ENCODE measurements at regions of chr1 and their contacts with region 1.

Region 1: GRCh38 chr1:182601416-182601786 is 2.8 kb downstream of the RGS16 start:
- DNase-seq: peak; percentile 76 to 93
- H3K4me3 ChIP-seq: peak overlapping the region in 3 of 4 donors; percentile 2 to 47 (median 11)
- H3K27ac ChIP-seq: peak overlapping the region in 3 of 5 donors; percentile 18 to 80 (median 70)
- H3K4me1 ChIP-seq: peaks cover 30 to 51% (median 33%) of the 10 kb centered on the region in 4 donors
- H3K27me3 ChIP-seq: no peaks in the 10 kb centered on the region
- CTCF ChIP-seq: peak in 6 of 7 experiments; percentile 61 to 96 (median 84)
- EP300 ChIP-seq: no peak
- POLR2A ChIP-seq: no peak

Region 2: GRCh38 chr1:182789138-182790076 is 188.0 kb after region 1 on chr1 and contains the start of gene NPL:
- intact Hi-C with region 1: loop called (anchors 2 kb)
- DNase-seq: peak; percentile 85 to 94
- H3K4me3 ChIP-seq: peak within 1 kb of the TSS; percentile 63 to 80 (median 72)
- H3K27ac ChIP-seq: peak within 1 kb of the TSS; percentile 70 to 83 (median 75)
- H3K4me1 ChIP-seq: peaks cover 4 to 41% (median 18%) of the 10 kb centered on the region in 4 donors
- H3K27me3 ChIP-seq: no peaks in the 10 kb centered on the region
- CTCF ChIP-seq: no peak
- EP300 ChIP-seq: no peak
- POLR2A ChIP-seq: no peak
- total RNA-seq, gene NPL: 0.45 to 48.5 (median 5.5) TPM

Measured in stomach (tissue), 19 donors.